Endothelial cell of umbilical vein (primary cell): ENCODE measurements at regions of chr9 and their contacts with region 1.

Region 1: GRCh38 chr9:77149879-77150278 is 27.5 kb upstream of the VPS13A start:
- DNase-seq: no peak
- H3K4me3 ChIP-seq: no peak overlapping the region
- H3K27ac ChIP-seq: no peak overlapping the region
- H3K4me1 ChIP-seq: peaks cover 2% of the 10 kb centered on the region
- H3K27me3 ChIP-seq: peaks cover 8 to 28% of the 10 kb centered on the region in 2 experiments
- CTCF ChIP-seq: no peak
- POLR2A ChIP-seq: no peak

Region 2: GRCh38 chr9:77011973-77012821 is 137.7 kb before region 1 on chr9:
- CTCF ChIA-PET with region 1: interaction called, 9 read pairs
- POLR2A ChIA-PET with region 1: no interaction called
- dilution Hi-C with region 1: no loop called
- intact Hi-C with region 1: loop called (anchors 1 kb)
- DNase-seq: peak; percentile 54
- H3K4me3 ChIP-seq: no peak overlapping the region
- H3K27ac ChIP-seq: no peak overlapping the region
- H3K4me1 ChIP-seq: peaks cover 7% of the 10 kb centered on the region
- H3K27me3 ChIP-seq: peaks cover 70 to 91% of the 10 kb centered on the region in 2 experiments
- CTCF ChIP-seq: peak; percentile 87 to 90
- POLR2A ChIP-seq: no peak

Region 3: GRCh38 chr9:77131399-77131798 is 18.5 kb before region 1 on chr9:
- CTCF ChIA-PET with region 1: interaction called, 10 read pairs
- POLR2A ChIA-PET with region 1: no interaction called
- dilution Hi-C with region 1: no loop called
- intact Hi-C with region 1: no loop called
- DNase-seq: no peak
- H3K4me3 ChIP-seq: no peak overlapping the region
- H3K27ac ChIP-seq: no peak overlapping the region
- H3K4me1 ChIP-seq: no peaks in the 10 kb centered on the region
- H3K27me3 ChIP-seq: peaks cover 2 to 10% of the 10 kb centered on the region in 2 experiments
- CTCF ChIP-seq: no peak
- POLR2A ChIP-seq: no peak

Region 4: DNA sequence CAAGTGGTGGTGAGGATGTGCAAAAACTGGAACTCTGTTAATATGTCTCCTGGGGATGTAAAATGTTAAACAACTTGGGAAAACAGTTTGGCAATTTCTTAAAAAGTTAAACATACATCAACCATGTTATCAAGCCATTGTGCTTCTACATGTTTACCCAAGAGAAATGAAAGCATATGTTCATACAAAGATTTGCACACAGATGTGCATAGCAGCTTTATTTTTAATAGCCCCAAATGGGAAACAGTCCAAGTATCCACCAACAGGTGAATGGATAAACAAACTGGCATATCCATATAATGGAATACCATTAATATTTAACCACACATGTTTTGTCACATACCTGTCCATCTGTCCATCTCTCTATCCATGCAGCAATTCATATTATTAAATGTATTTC is 33.7 kb after region 1 on chr9:
- CTCF ChIA-PET with region 1: no interaction called
- POLR2A ChIA-PET with region 1: no interaction called
- dilution Hi-C with region 1: no loop called
- intact Hi-C with region 1: no loop called
- DNase-seq: no peak
- H3K4me3 ChIP-seq: no peak overlapping the region
- H3K27ac ChIP-seq: no peak overlapping the region
- H3K4me1 ChIP-seq: peaks cover 9% of the 10 kb centered on the region
- H3K27me3 ChIP-seq: no peaks in the 10 kb centered on the region
- CTCF ChIP-seq: no peak
- POLR2A ChIP-seq: no peak